Pancreas (tissue), 10 donors: ENCODE measurements at regions of chr3 and their contacts with region 1.

Region 1: GRCh38 chr3:127959846-127960245 is 44.8 kb downstream of the KBTBD12 start:
- DNase-seq: peak in 3 of 6 donors; percentile 21 to 50 (median 29)
- ATAC-seq: peak; percentile 76 to 88 (median 86)
- H3K4me3 ChIP-seq: no peak overlapping the region
- H3K27ac ChIP-seq: no peak overlapping the region
- H3K4me1 ChIP-seq: no peaks in the 10 kb centered on the region
- H3K27me3 ChIP-seq: no peaks in the 10 kb centered on the region
- CTCF ChIP-seq: no peak

Region 2: DNA sequence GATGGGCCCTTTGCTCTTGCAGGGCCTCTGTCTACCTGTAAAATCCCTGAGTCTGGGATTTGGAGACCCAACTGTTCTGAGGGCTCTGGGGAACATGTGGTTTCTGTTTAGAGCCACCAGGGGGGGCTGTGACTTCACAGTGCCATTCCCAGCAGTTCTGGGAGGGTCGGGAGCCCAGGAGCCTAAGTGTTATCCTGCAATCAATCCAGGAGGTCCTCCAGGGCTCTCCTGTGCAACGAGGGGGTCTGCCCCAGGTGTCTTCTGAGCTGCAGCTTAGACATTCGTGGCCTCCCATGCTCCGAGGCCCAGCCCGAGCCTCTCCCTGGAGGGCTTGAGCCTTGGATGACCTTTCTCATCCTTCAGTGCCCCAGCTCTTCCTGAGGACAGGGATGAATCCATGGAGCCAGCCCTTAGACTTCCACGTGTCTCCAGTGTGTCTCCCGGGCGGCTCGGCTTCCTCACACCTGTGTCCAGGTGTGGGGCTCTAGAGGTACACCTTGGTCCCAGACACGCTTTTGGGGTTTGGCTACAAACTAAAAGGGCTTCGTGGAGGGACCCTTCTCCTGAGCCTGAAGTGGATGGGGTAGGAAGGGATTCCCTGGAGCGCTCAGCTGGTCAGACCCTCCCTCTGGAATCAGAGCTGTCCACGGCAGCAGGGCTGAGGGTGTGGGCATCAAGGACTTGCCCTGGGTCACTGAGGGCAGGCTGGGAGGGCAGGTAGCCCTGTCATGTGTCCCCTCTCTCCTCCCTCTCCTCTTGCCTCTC is 307.4 kb before region 1 on chr3:
- intact Hi-C with region 1: loop called in 1 of 3 experiments (anchors 10 kb)
- DNase-seq: peak in 1 of 6 donors; percentile 52
- ATAC-seq: peak; percentile 67 to 90 (median 86)
- H3K4me3 ChIP-seq: no peak overlapping the region
- H3K27ac ChIP-seq: no peak overlapping the region
- H3K4me1 ChIP-seq: no peaks in the 10 kb centered on the region
- H3K27me3 ChIP-seq: no peaks in the 10 kb centered on the region
- CTCF ChIP-seq: peak; percentile 62 to 87 (median 80)